GM12878 (cell line): ENCODE measurements at regions of chr5 and their contacts with region 1.

Region 1: GRCh38 chr5:124001036-124001615 is 489.1 kb downstream of the CSNK1G3 start:
- DNase-seq: no peak
- ATAC-seq: no peak
- H3K4me3 ChIP-seq: no peak overlapping the region
- H3K27ac ChIP-seq: no peak overlapping the region
- H3K4me1 ChIP-seq: no peaks in the 10 kb centered on the region
- H3K27me3 ChIP-seq: no peaks in the 10 kb centered on the region; a peak in 1 of 4 replicates
- CTCF ChIP-seq: no peak
- EP300 ChIP-seq: no peak
- POLR2A ChIP-seq: no peak
- RAD21 ChIP-seq: no peak

Region 2: DNA sequence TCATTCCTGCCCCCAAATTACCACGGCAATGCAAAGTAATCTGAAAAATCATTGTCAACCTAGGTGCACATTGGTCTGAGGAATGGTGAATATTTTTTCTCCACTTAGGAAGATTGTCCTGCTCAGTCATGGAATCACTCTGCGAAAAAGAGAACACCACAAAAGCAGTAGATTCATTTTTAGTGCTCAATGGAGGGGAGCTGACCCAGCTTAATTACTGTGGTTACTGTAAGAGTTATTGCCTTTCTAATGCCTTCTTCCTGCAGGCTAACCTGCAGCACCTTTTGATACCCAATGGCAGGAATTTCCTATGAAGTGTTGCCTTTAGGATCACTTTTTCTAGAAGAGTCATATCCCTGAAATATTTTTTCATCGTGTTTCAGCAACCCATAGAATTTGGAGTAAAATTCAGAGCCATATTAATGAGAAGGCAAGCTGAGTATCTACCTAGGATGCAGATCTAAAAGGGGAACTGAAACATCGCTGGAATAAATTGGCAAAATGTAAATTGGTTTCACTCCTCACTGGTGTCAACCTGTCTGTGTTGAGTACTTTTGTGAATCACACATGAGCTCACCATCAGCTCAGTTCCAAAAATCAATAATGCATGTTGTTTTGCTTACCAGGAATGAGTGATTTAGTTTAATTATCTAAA is 24.6 kb before region 1 on chr5:
- CTCF ChIA-PET with region 1: no interaction called
- POLR2A ChIA-PET with region 1: interaction called, 10 read pairs
- RAD21 ChIA-PET with region 1: interaction called, 3 read pairs
- SMC1A ChIA-PET with region 1: interaction called, 4 read pairs
- in situ Hi-C with region 1: no loop called
- intact Hi-C with region 1: no loop called
- DNase-seq: peak; percentile 55
- ATAC-seq: peak; percentile 91
- H3K4me3 ChIP-seq: no peak overlapping the region
- H3K27ac ChIP-seq: no peak overlapping the region
- H3K4me1 ChIP-seq: no peaks in the 10 kb centered on the region
- H3K27me3 ChIP-seq: no peaks in the 10 kb centered on the region; a peak in 1 of 4 replicates
- CTCF ChIP-seq: no peak
- EP300 ChIP-seq: 0 out of 4 replicates have a peak, but pooled peaks of 1 of the 2 experiments have one; percentile 46
- POLR2A ChIP-seq: no peak
- RAD21 ChIP-seq: no peak